Mammary epithelial cell (primary cell): ENCODE measurements at regions of chr2 and their contacts with region 1.

Region 1: DNA sequence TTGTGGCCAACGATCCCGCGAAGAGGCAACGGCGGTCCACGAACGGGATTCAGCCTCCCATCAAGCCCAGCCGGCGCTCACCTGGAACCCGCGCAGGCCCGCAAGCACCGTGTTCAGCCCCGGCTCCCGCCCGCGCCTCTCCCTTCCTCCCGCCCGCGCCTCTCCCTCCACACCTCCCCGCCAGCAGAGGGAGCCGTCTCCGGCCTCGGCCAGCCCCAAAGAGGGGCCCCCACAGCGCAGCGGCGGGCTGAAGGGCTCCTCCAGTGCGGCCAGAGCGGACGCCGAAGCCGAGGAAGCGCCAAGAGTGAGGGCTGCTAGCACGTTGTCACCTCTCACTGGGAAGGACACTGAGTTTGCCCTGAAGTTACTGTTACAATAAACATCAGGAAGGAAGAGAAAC is 55.3 kb upstream of the LAPTM4A start:
- DNase-seq: peak; percentile 38
- H3K4me3 ChIP-seq: peak overlapping the region in 2 of 3 experiments; percentile 42 to 51
- H3K27ac ChIP-seq: no peak overlapping the region
- H3K4me1 ChIP-seq: peaks cover 22% of the 10 kb centered on the region
- H3K27me3 ChIP-seq: no peaks in the 10 kb centered on the region
- CTCF ChIP-seq: peak; percentile 30 to 78

Region 2: GRCh38 chr2:20021405-20022009 is 85.2 kb before region 1 on chr2:
- CTCF ChIA-PET with region 1: no interaction called
- dilution Hi-C with region 1: loop called (anchors 5 kb)
- in situ Hi-C with region 1: no loop called
- intact Hi-C with region 1: no loop called
- DNase-seq: no peak
- H3K4me3 ChIP-seq: no peak overlapping the region
- H3K27ac ChIP-seq: no peak overlapping the region
- H3K4me1 ChIP-seq: peaks cover under 1% of the 10 kb centered on the region
- H3K27me3 ChIP-seq: no peaks in the 10 kb centered on the region
- CTCF ChIP-seq: no peak

Region 3: DNA sequence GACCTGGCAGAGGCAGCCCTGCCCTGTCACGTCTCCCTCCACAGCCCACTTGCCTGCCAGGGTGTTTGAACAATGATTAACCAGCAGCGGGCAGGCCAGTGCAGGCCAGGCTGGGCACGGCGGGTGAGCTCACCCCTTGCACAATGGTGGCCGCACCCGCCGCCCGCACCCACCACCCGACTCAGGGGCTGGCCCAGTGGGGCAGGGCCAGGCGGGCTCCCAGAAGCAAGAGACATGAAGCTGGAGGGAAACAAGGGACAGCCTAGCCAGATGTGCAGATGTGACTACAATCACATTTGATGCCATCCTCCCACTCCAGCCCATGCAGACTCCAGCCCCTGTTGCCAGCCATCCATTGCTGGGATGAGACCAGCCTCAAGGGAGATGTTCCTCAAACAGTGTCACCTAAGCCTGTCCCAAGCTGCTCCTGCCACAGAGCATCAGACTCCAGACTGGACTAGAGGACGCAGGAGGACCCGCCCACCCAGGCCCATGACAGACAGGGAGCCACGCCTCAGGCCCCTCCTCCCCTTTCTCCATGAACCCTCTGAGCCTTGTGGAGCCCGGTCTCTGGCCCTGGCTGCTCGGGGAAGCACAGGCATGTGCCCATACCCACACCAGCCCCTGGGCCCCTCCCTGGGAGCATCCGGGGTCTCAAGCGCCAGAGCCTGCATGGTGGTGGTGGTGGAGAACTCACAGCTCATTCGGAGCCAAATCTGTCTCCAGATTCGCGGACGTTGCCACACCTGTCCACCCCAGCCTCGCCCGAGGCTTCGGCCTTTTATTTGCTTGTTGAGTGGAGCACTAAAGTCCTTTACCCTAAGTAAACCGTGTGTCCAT is 73.2 kb after region 1 on chr2:
- CTCF ChIA-PET with region 1: no interaction called
- dilution Hi-C with region 1: loop called (anchors 5 kb)
- in situ Hi-C with region 1: loop called in 1 of 2 experiments (anchors 5 kb)
- intact Hi-C with region 1: loop called (anchors 2 kb)
- DNase-seq: peak; percentile 95
- H3K4me3 ChIP-seq: no peak overlapping the region
- H3K27ac ChIP-seq: peak overlapping the region; percentile 85
- H3K4me1 ChIP-seq: peaks cover 55% of the 10 kb centered on the region
- H3K27me3 ChIP-seq: no peaks in the 10 kb centered on the region
- CTCF ChIP-seq: peak; percentile 14 to 54

Region 4: DNA sequence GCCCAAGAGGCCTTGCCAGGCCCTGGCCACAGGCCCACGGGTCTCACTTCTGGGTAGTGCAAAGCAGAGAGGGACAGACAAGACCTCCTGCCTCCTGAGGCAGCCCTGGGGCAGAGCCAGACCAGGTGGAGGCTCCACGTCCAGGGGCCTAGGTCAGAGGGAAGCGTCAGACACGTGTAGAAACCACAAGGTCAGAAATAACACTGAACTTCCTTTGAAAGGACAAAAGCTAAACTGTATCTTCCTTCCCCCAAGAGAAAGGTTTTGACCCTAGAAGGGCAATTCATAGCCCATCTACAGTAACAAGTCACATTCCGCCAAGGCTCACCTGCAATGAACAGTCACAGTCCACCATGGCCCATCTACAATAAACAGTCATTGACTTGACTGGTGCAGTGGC is 100.3 kb after region 1 on chr2:
- CTCF ChIA-PET with region 1: interaction called, 4 read pairs
- dilution Hi-C with region 1: no loop called
- in situ Hi-C with region 1: loop called in 1 of 2 experiments (anchors 5 kb)
- intact Hi-C with region 1: no loop called
- DNase-seq: no peak
- H3K4me3 ChIP-seq: no peak overlapping the region
- H3K27ac ChIP-seq: peak overlapping the region; percentile 69
- H3K4me1 ChIP-seq: peaks cover 85% of the 10 kb centered on the region
- H3K27me3 ChIP-seq: no peaks in the 10 kb centered on the region
- CTCF ChIP-seq: no peak

Region 5: DNA sequence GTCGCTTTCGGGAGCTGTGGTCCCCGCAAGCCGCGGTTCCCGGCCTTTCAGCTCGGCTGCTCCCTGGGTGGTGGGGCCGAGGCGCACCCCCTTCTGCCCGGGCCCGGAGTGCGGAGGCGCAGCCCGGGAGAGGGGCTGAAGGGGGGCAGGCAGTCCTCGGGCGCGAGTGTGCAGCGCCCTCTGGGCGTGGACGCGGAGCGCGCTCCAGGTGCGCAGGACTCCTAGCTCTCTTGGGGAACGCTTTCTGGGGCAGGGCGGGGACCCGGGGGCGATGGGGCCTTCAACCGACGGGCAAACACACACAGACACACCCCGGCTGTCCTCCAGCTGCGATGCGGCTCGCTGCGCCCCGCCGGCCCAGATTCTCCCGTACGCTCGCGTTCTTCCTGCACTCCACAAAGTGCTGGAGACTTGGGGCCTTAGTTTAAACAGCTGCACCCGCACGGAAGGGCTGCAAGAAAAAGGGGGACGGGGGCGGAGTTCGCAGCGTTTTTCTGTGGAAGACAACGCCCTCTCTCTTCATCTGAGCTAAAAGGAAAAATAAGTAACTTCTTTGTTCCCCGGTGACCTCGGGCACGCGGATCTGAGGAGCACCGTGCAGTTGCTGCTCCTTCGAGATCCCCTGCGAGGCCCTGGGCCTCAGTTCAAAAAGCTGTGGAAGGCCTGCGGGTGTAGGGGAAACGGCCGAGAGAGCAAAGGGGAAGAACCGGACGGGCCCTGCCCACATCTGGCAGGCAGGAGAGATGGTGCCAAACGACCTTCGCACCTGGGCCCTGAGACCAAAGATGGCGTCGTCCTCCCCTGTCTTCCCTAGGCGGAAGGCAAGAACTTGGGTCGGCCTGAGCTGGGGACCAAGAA is 118.8 kb after region 1 on chr2:
- CTCF ChIA-PET with region 1: interaction called, 5 read pairs
- dilution Hi-C with region 1: no loop called
- in situ Hi-C with region 1: no loop called
- intact Hi-C with region 1: loop called (anchors 1 kb)
- DNase-seq: peak; percentile 85
- H3K4me3 ChIP-seq: peak overlapping the region; percentile 48 to 91 (median 72)
- H3K27ac ChIP-seq: peak overlapping the region; percentile 77
- H3K4me1 ChIP-seq: peaks cover 27% of the 10 kb centered on the region
- H3K27me3 ChIP-seq: no peaks in the 10 kb centered on the region
- CTCF ChIP-seq: peak in 1 of 2 donors; percentile 79

Region 6: DNA sequence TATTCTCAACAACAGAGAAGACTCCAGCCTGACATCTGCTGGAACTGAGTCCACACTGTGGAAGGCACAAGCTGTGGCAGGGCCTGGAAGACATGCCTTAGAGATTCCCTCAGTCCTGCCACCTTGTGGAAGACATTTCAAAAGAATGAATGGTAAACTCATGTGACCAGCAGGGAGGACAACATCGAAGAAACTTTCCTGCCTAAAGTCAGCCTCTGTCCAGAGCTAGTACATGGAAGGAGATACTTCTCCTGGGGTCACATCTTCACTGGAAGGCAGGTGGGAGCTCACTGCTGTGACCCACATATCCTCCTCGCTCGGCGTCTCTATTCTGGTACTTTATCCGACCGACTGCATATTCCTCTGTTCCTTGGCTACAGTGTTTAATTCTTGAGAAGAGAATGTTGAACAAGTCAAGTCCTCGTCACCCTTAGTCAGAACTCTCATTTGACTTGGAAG is 184.4 kb after region 1 on chr2:
- CTCF ChIA-PET with region 1: interaction called, 9 read pairs
- dilution Hi-C with region 1: no loop called
- in situ Hi-C with region 1: loop called in 1 of 2 experiments (anchors 10 kb)
- intact Hi-C with region 1: loop called (anchors 1 kb)
- DNase-seq: peak; percentile 80
- H3K4me3 ChIP-seq: no peak overlapping the region
- H3K27ac ChIP-seq: peak overlapping the region; percentile 27
- H3K4me1 ChIP-seq: peaks cover 19% of the 10 kb centered on the region
- H3K27me3 ChIP-seq: no peaks in the 10 kb centered on the region
- CTCF ChIP-seq: peak; percentile 79 to 82

Region 7: DNA sequence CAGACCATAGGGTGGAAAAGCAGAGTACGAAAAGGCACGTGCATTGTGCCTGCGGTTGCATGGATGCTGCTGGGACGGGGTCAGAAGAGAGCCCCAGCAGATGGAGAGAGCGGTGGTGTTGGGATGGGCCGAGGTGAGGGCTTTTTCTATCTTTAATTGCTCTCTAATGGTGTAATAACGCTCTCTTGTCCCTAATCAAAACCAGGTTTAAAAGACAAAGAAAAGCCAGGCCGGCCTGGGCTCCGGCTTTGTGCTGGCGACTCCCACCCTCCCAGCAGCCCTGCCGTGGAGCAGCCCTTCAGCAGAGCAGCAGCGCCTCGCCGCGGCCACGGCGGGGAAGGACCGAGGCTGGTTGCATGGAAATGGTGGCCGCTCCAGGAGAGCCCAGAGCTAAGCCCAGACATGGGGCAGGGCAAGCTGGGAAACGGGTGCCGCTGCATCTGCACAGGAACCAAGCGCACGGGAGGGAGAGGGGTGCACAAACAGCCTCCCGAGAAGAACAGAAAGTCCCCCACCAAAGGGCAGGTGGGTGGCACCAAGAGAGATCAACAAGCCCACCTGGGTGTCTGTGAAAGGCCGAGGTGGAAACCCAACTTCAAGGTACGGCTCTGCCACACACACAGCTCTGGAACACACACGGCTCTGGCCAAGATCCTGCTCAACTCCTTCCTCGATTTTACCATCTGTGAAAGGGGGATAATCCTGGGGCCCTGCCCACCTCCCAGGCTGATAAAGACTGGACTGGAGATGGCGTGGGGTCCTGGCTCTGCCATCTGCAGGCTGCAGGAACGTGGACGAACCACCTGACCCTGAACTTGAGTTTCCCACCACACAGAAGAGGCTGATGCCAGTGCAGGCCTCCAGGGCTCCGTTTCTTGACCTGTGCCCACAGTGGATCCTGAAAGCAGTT is 529.2 kb after region 1 on chr2:
- CTCF ChIA-PET with region 1: no interaction called
- dilution Hi-C with region 1: no loop called
- in situ Hi-C with region 1: no loop called
- intact Hi-C with region 1: loop called (anchors 10 kb)
- DNase-seq: peak; percentile 30
- H3K4me3 ChIP-seq: no peak overlapping the region
- H3K27ac ChIP-seq: no peak overlapping the region
- H3K4me1 ChIP-seq: peaks cover 23% of the 10 kb centered on the region
- H3K27me3 ChIP-seq: no peaks in the 10 kb centered on the region
- CTCF ChIP-seq: peak; percentile 94 to 96

Region 8: DNA sequence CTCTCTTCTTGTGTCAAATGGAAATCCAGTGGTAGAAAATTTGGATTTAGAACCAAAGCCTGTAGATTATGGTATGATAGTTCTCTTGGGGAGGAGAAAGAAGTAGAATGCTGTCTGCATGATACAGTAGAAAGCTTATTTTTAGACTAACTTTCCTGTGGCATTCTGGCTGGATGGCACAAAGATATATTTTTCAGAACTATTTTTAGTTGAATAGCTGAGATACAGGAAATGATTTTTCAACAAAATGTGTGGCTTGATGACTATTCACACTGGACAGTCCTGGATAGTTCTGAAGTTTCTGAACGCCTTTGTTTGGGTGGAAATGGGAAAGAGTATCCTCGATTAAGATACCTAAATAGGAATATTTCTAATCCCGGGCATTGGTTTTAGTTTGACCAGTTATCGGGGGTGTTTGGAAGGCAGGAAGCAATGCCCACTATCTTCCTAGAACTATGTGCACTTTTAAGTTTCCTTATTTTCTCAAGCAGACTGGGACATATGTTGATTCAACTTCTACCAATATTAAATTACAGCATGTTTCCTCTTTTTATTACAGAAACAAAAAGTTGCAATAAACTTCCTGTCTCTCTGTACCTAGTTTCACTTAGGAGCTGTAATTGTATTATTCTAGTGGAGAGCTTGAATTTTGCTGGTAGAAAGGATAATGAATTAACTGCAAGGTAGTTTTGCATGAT is 592.3 kb after region 1 on chr2:
- CTCF ChIA-PET with region 1: no interaction called
- dilution Hi-C with region 1: no loop called
- in situ Hi-C with region 1: no loop called
- intact Hi-C with region 1: no loop called
- DNase-seq: no peak
- H3K4me3 ChIP-seq: no peak overlapping the region
- H3K27ac ChIP-seq: no peak overlapping the region
- H3K4me1 ChIP-seq: no peaks in the 10 kb centered on the region
- H3K27me3 ChIP-seq: no peaks in the 10 kb centered on the region
- CTCF ChIP-seq: no peak